AG04450 (cell line): ENCODE measurements at regions of chr1 and their contacts with region 1.

Region 1: DNA sequence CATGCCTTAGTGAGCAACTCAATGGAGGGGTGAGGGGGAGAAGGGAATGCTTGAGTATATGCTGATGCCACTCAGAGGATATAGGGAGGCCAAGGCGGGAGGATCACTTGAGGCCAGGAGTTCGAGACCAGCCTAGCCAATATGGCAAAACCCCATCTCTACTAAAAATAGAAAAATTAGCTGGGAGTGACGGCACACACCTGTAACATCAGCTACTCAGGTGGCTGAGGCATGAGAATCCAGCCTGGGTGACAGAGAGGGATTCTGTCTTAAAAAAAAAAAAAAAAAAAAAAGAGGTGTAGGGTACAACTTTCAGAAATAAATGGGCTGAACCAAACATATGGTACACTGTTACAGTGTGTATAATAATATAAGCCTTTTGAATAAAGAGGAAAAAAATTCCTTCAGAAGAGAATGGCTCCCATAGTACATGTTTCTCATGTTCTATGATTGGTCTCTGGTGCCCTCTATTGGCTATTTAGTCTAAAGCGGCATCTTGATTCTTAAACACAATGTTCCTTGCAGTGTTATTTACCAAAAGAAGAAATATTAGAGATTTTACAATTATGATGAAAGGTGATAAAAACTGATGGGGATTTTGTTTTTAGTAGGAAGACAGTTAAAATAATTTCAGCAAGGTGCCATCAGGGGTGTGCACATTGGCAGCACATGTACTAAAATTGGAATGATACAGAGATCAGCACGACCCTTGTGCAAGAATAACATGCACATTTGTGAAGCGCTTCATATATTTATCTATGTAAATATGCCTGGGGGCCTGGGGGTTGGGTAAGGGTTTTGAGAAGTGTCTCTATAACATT is 109.8 kb downstream of the PATJ start:
- DNase-seq: peak; percentile 58
- H3K4me3 ChIP-seq: no peak overlapping the region
- H3K27ac ChIP-seq: no peak overlapping the region
- H3K27me3 ChIP-seq: peaks cover 3% of the 10 kb centered on the region
- CTCF ChIP-seq: peak; percentile 78

Region 2: DNA sequence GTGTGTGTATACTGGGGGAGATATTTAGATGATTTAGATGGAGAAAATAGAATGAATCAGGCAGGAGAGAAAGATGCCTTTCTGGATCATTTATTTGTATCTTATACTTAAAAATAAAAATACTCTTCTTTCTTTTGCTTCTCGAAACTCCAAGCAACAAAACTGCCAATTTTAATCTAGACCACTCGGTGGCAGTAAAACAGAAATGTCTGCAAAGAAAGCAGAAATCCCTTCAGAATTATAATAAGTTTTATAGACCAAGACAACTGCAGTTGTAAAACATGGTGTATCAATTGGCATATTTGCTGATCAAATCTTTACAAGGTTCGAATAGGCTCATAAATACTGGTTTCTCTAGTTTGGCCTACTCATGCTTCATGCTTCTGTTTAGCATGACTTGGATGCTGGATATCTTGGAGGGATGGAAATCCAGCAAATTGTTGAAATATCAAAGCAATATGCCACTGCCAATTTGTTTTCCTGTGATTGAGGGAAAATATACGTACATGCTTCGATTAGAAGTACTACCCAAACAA is 1763.4 kb before region 1 on chr1:
- CTCF ChIA-PET with region 1: interaction called, 12 read pairs
- POLR2A ChIA-PET with region 1: no interaction called
- DNase-seq: no peak
- H3K4me3 ChIP-seq: no peak overlapping the region
- H3K27ac ChIP-seq: no peak overlapping the region
- H3K27me3 ChIP-seq: no peaks in the 10 kb centered on the region
- CTCF ChIP-seq: peak; percentile 22; the same call in 1 of the 2 replicates

Region 3: DNA sequence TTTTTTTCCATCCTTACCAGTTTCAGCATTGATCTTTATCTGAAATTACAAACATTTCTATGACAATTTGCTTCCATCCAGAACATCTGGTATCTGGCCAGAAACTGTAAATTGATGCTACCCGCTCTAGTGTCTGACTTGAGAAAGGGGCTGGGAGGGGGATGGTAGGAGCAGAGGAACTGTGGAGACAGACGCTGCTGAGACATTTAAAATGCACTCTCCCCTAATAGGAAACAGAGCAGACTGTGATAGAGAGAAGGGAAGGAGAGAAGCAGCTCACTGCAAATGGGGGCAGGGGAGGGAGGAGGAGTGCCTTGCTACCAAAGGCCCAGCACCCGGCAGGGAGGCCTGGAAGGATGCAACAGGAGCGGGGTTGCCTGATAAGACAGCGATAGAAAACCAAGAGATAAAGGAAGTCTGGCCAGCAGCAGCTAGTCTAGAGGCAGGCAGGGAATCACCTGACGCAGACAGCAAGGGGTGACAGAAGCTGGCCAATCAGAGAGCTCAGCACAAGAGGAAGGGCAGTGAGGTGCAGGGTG is 965.2 kb before region 1 on chr1:
- CTCF ChIA-PET with region 1: interaction called, 10 read pairs
- POLR2A ChIA-PET with region 1: no interaction called
- DNase-seq: no peak
- H3K4me3 ChIP-seq: no peak overlapping the region
- H3K27ac ChIP-seq: no peak overlapping the region
- H3K27me3 ChIP-seq: no peaks in the 10 kb centered on the region
- CTCF ChIP-seq: no peak

Region 4: DNA sequence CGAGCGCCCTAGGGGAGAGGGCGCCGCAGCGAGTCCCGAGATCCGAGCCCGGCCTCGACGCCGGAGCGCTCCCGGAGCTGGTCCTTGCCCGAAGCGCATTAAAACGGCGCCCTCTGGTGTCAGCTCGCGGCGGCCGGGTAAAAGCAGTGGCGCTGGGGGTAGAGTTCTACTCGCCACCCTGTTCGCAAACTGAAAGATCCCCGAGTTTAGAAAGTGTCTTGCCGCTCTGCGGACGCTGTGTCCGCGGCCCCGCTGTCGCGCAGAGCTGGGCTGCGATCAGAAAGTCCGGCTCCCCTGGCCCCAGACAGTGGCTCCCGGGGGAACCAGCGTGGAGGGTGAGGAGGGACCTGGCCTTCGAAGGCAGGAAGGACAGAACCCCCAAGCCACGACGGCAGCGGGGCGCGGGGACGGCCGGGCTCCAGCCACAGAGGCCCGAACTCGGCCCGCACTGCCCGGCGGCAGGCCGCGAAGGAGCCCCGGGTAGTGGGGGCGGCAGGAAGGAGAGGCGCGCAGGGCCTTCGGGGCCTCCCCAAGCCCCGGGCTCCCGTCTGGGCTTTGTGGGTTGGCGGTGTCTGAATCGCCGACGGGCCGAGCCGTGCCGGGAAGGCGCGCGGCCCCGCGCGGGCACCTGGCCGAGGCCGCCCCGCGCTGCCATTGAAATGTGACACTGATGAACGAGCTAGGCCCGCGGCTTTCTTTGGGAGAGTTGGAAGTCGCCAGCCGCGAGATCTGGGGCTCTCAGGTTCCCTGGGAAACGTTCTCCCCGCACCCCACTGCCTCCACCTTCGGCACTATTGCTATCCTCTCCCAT is 808.8 kb before region 1 on chr1:
- CTCF ChIA-PET with region 1: interaction called, 10 read pairs
- POLR2A ChIA-PET with region 1: no interaction called
- DNase-seq: peak; percentile 23
- H3K4me3 ChIP-seq: peak overlapping the region; percentile 47
- H3K27ac ChIP-seq: no peak overlapping the region
- H3K27me3 ChIP-seq: peaks cover 25% of the 10 kb centered on the region
- CTCF ChIP-seq: peak; percentile 81

Region 5: GRCh38 chr1:61588736-61589672 is 263.1 kb before region 1 on chr1:
- CTCF ChIA-PET with region 1: interaction called, 22 read pairs
- POLR2A ChIA-PET with region 1: no interaction called
- DNase-seq: peak; percentile 6
- H3K4me3 ChIP-seq: no peak overlapping the region
- H3K27ac ChIP-seq: no peak overlapping the region
- H3K27me3 ChIP-seq: peaks cover 2% of the 10 kb centered on the region
- CTCF ChIP-seq: peak; percentile 83

Region 6: DNA sequence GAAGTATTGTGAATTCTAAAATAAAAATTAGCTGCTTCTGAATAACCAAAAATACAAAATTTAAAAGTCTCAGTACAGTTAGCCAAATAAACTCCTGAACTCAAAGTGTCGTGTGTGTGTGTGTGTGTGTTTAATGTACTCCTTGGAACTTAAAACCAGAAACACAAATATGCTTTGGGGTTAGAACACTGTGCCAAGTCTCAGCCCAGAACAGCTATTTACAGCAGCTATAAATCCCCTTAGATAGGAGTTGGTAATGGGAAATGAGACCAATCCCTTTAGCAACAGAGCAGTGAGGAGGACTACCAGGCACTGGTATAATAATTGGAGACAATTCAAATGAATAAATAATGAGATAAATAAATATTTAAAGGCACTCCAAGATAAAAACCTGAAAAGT is 26.7 kb before region 1 on chr1:
- CTCF ChIA-PET with region 1: no interaction called
- POLR2A ChIA-PET with region 1: no interaction called
- DNase-seq: no peak
- H3K4me3 ChIP-seq: no peak overlapping the region
- H3K27ac ChIP-seq: no peak overlapping the region
- H3K27me3 ChIP-seq: no peaks in the 10 kb centered on the region
- CTCF ChIP-seq: no peak

Region 7: GRCh38 chr1:61869691-61870109 is 17.6 kb after region 1 on chr1:
- CTCF ChIA-PET with region 1: interaction called, 13 read pairs
- POLR2A ChIA-PET with region 1: no interaction called
- DNase-seq: no peak
- H3K4me3 ChIP-seq: no peak overlapping the region
- H3K27ac ChIP-seq: no peak overlapping the region
- H3K27me3 ChIP-seq: no peaks in the 10 kb centered on the region
- CTCF ChIP-seq: no peak